Activated naive CD4-positive, alpha-beta T cell treated with anti-CD3 and anti-CD28 coated beads for 36 hours (primary cell): ENCODE measurements at regions of chr20 and their contacts with region 1.

Region 1: GRCh38 chr20:49278036-49278817 is at the start of gene ZNFX1:
- DNase-seq: peak; percentile 99
- H3K4me3 Mint-ChIP-seq: peak within 1 kb of the TSS; percentile 99
- H3K27ac Mint-ChIP-seq: peak within 1 kb of the TSS; percentile 100
- H3K4me1 Mint-ChIP-seq: peaks cover 62% of the 10 kb centered on the region
- H3K27me3 Mint-ChIP-seq: no peaks in the 10 kb centered on the region
- total RNA-seq, gene ZNFX1: 18.2 to 19.0 TPM

Region 2: DNA sequence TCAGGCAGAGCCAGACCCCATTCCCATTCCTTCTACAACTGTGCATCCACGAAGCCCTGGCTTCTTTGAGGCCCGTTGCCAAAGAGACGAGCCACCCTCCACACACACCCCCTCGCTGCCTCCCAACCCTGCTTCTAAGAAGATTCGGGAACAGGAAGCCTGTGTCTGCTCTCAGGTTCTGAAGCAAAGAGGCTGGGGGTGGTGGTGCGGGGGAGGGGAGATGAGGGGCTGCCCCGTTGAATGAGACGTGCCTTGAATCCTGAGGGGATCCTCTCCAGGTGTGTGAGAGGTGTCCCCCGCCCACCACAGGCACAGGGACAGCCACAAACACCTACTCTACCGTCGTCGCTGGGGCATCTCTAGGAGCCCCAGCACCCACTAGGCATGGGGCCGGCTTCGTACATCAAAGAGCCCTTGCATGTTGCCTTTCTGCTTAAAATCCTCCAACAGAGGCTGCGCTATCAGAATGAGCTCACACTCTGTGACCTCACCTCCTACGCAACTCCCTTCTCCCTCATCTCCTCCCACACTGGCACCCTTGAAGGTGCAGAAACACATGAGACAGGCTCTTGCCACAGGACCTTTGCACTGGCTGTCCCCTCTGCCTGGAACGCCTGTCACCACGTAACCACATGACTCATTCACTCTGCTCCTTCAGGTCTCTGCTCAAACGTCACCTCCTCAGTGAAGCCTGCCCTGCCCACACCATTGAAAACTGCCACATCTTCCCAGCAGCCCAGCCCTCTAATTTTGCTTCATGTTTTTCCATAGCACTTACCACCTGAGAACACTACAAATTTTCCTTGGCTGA is 509.0 kb before region 1 on chr20:
- CTCF ChIA-PET with region 1: no interaction called
- intact Hi-C with region 1: loop called (anchors 5 kb)
- DNase-seq: peak; percentile 98
- H3K4me3 Mint-ChIP-seq: peak overlapping the region; percentile 64
- H3K27ac Mint-ChIP-seq: peak overlapping the region; percentile 68
- H3K4me1 Mint-ChIP-seq: peaks cover 67% of the 10 kb centered on the region
- H3K27me3 Mint-ChIP-seq: no peaks in the 10 kb centered on the region

Region 3: DNA sequence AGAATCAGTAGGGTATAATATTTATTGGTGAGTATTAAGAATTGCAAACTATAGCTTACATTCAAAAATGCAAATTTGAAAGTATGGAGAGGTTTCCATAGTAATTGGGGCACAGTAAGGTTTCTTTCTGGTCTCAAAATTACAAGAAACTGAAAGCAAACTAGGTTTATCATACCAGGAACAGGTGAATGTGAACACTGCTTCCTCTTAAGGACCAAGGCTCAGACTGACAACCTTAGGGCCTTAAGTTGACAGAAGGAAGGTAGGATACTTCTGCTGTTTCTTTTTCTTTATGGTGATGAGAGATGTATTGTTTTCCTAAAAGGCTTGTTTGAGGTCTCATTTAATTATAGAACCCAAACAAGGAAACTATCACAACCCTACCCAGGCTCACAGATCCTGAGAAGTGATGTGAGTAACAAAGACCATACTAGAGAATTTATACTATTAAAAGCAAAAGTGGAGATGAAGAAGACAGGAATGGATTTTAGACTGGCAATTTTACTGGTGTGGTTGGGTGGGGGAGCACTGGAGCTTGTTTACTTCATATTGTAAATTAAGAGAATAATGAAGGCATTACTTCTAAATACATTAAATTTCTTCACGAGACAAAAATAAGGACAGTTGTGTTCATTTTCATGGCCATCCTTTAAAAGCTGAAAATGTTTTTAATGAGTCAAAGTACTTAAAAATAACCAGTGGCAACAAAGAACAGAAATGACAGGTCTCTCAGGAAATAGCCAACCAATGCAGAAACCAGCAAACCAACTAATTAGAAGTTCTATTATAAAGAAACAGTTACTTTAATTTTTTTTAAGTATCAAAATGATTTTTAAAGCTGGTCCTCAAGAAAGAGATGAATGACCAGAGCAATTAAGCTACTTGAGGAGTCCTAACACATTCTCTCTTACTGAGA is 111.4 kb before region 1 on chr20:
- CTCF ChIA-PET with region 1: no interaction called
- intact Hi-C with region 1: loop called (anchors 1 kb)
- DNase-seq: no peak
- H3K4me3 Mint-ChIP-seq: peak overlapping the region; percentile 48
- H3K27ac Mint-ChIP-seq: peak overlapping the region; percentile 84
- H3K4me1 Mint-ChIP-seq: peaks cover 71% of the 10 kb centered on the region
- H3K27me3 Mint-ChIP-seq: no peaks in the 10 kb centered on the region

Region 4: DNA sequence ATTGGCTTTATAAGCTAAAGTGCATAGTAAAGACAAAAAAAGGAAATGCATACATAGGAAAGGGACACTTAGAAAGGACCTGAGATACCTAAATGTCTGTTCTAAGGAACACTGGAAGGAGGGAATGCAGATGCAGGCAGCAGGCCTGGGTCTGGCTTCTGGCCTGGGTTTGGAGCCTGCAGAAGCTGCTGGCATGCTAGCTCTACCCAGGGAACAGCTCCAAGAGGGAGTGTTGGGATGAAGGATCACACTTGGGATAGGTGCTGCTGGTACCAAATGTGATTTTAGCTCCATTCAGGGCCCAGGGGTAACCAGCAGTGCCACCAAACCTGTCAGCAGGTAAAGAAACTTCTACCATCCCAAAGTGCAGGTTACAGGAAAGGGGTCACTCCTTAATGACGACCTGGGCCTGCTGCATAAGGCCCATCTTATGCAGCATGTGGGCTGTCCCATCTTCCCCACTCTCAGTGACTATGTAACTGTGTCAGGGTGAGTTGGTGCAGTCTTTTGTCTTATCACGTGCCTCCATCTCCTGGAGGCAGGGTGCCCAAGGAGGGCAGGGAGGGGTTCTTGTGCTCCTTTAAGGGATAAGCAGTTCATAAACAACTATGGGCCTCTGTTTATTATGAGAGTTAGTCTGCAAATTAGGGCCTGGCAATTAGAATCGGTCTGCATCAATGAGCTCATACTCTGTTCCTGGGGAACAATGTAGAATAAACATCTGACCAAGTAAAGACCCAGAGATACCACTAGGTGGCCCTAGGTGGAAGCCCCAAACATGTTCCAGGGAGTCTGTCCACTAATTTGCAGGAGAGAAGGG is 32.1 kb before region 1 on chr20:
- CTCF ChIA-PET with region 1: interaction called, 4 read pairs
- intact Hi-C with region 1: loop called (anchors 2 kb)
- DNase-seq: peak; percentile 48
- H3K4me3 Mint-ChIP-seq: no peak overlapping the region
- H3K27ac Mint-ChIP-seq: peak overlapping the region; percentile 58
- H3K4me1 Mint-ChIP-seq: peaks cover 4% of the 10 kb centered on the region
- H3K27me3 Mint-ChIP-seq: no peaks in the 10 kb centered on the region

Region 5: GRCh38 chr20:49699200-49699992 is 421.2 kb after region 1 on chr20:
- CTCF ChIA-PET with region 1: no interaction called
- intact Hi-C with region 1: loop called (anchors 10 kb)
- DNase-seq: peak; percentile 62
- H3K4me3 Mint-ChIP-seq: no peak overlapping the region
- H3K27ac Mint-ChIP-seq: peak overlapping the region; percentile 70
- H3K4me1 Mint-ChIP-seq: peaks cover 60% of the 10 kb centered on the region
- H3K27me3 Mint-ChIP-seq: no peaks in the 10 kb centered on the region

Region 6: DNA sequence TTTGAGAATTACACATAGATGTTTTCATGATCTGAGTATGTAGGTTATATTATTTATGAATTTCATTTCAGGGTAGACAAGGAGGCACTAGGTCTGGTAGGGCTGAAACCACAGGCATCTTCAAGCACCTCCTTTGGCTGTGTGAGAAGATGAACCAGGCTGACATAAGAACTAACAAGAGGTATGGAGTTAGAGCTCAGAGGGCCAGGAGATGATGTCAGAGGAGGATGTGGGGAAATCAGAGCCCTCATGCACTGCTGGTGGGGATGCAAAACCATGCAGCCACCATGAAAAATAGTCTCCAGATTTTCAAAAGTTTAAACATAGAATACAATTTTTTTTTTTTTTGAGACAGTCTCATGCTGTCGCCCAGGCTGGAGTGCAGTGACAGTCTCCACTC is 1426.8 kb after region 1 on chr20:
- CTCF ChIA-PET with region 1: no interaction called
- intact Hi-C with region 1: no loop called
- DNase-seq: no peak
- H3K4me3 Mint-ChIP-seq: no peak overlapping the region
- H3K27ac Mint-ChIP-seq: no peak overlapping the region
- H3K4me1 Mint-ChIP-seq: no peaks in the 10 kb centered on the region
- H3K27me3 Mint-ChIP-seq: peaks cover 2% of the 10 kb centered on the region